Esophagus muscularis mucosa (tissue), 4 donors: ENCODE measurements at regions of chr7 and their contacts with region 1.

Region 1: DNA sequence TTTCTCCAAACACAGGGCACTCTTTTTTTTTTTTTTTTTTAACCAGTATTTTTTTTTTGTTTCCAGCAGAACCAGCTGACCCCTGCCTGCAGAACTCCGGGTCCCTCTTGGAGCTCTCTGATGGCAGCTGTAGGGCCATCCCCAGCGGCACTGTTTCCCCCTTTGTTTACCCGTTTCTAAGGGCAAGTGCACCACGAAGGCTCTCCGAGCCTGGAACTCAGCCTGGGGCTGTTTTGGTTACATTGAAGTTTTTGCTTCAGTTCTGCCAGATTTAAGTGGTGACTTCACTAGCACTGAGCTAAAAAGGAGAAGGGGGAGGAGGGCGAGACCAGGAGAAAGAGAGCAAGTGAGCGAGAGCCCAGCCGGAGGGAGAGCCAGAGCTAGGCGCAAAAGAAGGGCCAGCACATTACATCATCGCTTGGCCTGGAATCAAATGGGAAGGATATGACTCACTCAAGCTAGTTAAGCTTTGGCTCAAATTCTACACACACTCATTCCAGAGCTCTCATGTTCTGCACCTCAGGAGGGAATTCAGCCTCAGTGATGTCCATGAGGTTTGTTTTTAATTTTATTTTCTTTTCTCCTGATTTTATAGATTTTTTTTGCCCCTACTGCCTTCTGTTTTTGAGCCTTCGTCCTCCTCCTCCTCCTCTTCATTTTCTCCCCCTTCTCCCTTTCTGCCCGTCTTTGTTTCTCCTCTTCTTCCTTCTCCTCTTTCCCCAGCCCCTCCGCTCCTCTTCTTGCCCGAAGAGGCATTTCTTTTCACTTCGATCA is 272.3 kb downstream of the TRIL start:
- DNase-seq: peak; percentile 98
- H3K4me3 ChIP-seq: peak overlapping the region; percentile 44 to 58 (median 50)
- H3K27ac ChIP-seq: peak overlapping the region; percentile 79 to 93 (median 86)
- H3K4me1 ChIP-seq: peaks cover 35 to 58% (median 46%) of the 10 kb centered on the region in 4 donors
- H3K27me3 ChIP-seq: no peaks in the 10 kb centered on the region
- CTCF ChIP-seq: peak in 1 of 3 experiments; percentile 8
- EP300 ChIP-seq: no peak
- POLR2A ChIP-seq: peak; percentile 81

Region 2: DNA sequence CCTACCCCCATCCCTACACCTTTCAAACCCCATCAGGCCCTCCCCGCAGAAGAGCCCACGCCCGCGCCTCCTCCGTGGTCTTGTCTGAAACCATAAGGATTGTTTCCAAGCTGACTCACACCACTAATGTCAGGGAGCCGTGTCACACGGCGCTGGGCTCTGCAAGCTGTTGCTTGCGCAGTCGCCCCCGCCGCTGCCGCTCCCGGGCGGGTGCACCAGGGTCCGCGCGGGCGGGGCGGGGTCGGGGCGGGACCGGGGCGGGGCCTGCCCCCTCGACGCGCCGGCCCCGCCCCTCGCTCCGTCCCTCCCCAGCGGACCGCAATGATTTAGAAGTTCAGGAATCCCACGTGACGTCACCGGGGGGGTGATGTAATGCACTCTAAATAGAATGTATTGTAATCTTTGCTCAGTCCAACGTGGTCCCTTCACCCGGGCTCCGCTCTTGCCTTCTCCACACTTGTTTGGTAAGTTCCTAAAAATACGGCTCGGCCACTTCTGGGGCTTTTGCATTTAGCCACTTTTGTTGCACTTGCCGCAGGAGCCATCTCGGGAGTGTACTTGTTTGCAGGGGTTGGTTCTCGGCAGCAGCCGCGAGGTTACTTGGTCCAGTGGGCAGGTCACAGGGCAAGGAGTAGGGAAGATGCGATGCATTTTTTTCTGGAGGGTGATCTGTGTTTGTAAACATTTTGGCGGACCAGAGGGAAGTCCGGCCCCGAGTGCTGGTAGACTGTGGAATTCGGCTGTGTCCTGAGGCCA is 276.7 kb before region 1 on chr7:
- intact Hi-C with region 1: loop called (anchors 5 kb)
- DNase-seq: peak; percentile 100
- H3K4me3 ChIP-seq: peak overlapping the region; percentile 65 to 85 (median 76)
- H3K27ac ChIP-seq: peak overlapping the region; percentile 91 to 93 (median 92)
- H3K4me1 ChIP-seq: peaks cover 29 to 57% (median 49%) of the 10 kb centered on the region in 4 donors
- H3K27me3 ChIP-seq: no peaks in the 10 kb centered on the region
- CTCF ChIP-seq: no peak
- EP300 ChIP-seq: no peak
- POLR2A ChIP-seq: peak; percentile 81

Region 3: DNA sequence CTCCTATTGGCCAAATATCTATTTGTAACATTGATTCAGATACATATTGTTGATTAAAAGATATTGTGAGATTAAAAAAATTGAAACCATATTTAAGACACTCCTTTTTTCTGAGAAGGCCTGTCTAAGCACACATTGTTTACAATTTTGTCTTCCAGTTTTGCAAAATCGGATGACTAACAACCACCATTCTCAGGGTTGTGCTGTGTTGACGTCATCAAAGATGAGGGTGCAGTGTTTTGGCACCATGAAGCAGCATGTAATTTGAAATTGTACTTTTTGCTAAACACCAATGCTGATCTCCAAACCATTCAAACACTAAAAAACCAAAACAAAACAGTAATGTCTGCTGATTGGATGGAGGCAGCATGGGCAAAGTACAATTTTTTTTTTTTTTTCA is 266.1 kb before region 1 on chr7:
- intact Hi-C with region 1: loop called (anchors 5 kb)
- DNase-seq: no peak
- H3K4me3 ChIP-seq: no peak overlapping the region
- H3K27ac ChIP-seq: peak overlapping the region in 2 of 4 donors; percentile 15 to 17
- H3K4me1 ChIP-seq: peaks cover 15 to 34% (median 24%) of the 10 kb centered on the region in 4 donors
- H3K27me3 ChIP-seq: no peaks in the 10 kb centered on the region
- CTCF ChIP-seq: no peak
- EP300 ChIP-seq: no peak
- POLR2A ChIP-seq: no peak

Region 4: DNA sequence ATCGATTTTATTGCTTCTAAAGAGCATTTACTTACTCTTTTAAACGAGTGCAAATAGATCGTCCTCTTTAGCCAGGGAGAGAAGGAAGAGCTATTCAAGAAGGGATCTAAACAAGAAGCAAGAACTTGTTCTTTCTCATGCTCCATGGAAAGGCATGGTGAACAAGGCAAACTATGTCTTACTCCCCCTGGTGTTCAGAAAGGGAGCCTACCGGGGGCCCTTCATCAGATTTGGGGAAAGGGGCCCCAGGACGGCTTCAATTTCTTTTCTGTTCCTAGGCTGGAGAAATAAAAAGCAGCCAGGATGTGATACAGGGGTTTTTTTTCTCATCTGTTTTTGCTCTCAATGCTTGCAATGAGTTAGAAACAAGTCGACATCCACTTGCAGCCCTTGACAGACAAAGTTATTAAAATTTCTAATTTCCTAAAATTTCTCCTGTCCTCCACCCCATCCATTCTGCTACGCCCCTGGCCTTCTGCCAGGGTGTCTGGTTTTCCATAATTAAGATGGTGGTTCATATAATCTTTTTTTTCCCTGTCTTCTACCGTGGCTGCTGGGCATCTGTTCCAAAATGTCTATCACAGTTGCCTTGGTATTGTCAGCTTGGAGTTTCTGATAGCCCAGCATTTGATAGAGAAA is 59.1 kb before region 1 on chr7:
- intact Hi-C with region 1: loop called (anchors 5 kb)
- DNase-seq: no peak
- H3K4me3 ChIP-seq: no peak overlapping the region
- H3K27ac ChIP-seq: peak overlapping the region in 3 of 4 donors; percentile 40 to 50 (median 49)
- H3K4me1 ChIP-seq: peaks cover 31 to 70% (median 52%) of the 10 kb centered on the region in 4 donors
- H3K27me3 ChIP-seq: no peaks in the 10 kb centered on the region
- CTCF ChIP-seq: peak; percentile 55 to 66 (median 63)
- EP300 ChIP-seq: no peak
- POLR2A ChIP-seq: no peak